ENCODE measurements at regions of chr5 and their contacts with region 1.

Region 1: GRCh38 chr5:163978897-163979296 is 473.5 kb downstream of the MAT2B start:
- DNase-seq: peak in 1 of 2 experiments; percentile 26
- H3K4me3 ChIP-seq: no peak overlapping the region
- H3K4me3 Mint-ChIP-seq: no peak overlapping the region
- H3K27ac Mint-ChIP-seq: no peak overlapping the region
- H3K4me1 ChIP-seq: no peaks in the 10 kb centered on the region
- H3K4me1 Mint-ChIP-seq: no peaks in the 10 kb centered on the region
- H3K27me3 ChIP-seq: no peaks in the 10 kb centered on the region
- H3K27me3 Mint-ChIP-seq: peaks cover 2% of the 10 kb centered on the region
- CTCF ChIP-seq: peak in 1 of 2 experiments; percentile 41

Region 2: DNA sequence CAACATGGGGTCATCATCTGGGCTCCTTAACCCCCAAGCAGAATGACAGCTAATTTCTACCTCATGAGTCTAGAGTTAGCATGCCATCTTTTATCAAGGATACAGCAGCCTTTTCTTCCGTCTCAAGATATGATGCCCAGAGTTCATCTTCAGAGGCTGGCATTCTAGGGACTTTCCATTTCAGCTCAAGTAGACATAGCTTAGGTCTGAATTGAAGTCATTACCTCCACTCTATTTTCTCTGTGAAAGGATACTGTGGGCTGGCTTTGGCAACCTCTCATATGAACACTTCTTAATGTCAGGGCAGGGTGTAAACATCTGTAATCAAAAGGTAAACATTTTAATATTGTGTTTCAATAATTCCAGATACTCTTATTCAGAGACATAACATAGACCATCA is 62.2 kb after region 1 on chr5:
- CTCF ChIA-PET with region 1: no interaction called
- POLR2A ChIA-PET with region 1: no interaction called
- intact Hi-C with region 1: no loop called
- DNase-seq: no peak
- H3K4me3 ChIP-seq: no peak overlapping the region
- H3K4me3 Mint-ChIP-seq: no peak overlapping the region
- H3K27ac Mint-ChIP-seq: no peak overlapping the region
- H3K4me1 ChIP-seq: no peaks in the 10 kb centered on the region
- H3K4me1 Mint-ChIP-seq: no peaks in the 10 kb centered on the region
- H3K27me3 ChIP-seq: no peaks in the 10 kb centered on the region
- H3K27me3 Mint-ChIP-seq: no peaks in the 10 kb centered on the region
- CTCF ChIP-seq: no peak

Region 3: DNA sequence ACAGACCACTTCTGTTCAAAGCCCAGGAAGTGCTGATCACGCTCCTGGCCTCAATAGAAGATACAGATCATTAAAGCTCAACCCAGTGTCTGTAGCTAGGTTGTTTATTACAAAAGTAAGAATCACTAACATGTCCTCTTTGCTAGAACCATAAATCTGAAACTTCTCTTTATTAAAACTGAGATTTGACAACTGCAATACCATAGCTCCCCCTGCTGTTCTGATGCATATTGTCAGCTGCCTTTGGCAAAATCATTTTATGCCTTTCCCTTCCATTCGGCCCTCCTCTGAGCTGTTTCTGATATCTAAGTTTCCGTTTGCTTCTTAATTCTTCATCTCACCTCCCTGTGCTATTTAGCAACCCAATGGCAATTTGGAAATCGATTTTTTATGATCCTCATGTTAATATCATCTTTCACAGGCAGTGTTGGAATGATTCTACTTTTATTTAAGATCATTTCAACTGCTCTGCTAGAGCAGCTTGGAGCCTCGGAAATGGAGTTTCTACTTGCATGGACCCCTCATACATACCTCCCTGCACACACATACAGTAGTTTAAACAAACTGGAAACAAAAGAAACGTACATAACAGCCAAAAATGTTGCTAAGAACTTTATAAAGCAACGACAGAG is 525.4 kb after region 1 on chr5:
- CTCF ChIA-PET with region 1: interaction called, 3 read pairs
- POLR2A ChIA-PET with region 1: no interaction called
- intact Hi-C with region 1: loop called (anchors 1 kb)
- DNase-seq: peak in 1 of 2 experiments; percentile 56
- H3K4me3 ChIP-seq: no peak overlapping the region
- H3K4me3 Mint-ChIP-seq: no peak overlapping the region
- H3K27ac Mint-ChIP-seq: no peak overlapping the region
- H3K4me1 ChIP-seq: no peaks in the 10 kb centered on the region
- H3K4me1 Mint-ChIP-seq: no peaks in the 10 kb centered on the region
- H3K27me3 ChIP-seq: no peaks in the 10 kb centered on the region
- H3K27me3 Mint-ChIP-seq: peaks cover 4% of the 10 kb centered on the region
- CTCF ChIP-seq: peak; percentile 70 to 79